Ascending aorta (tissue), 2 donors: ENCODE measurements at regions of chr1 and their contacts with region 1.

Region 1: GRCh38 chr1:55428944-55429931 is 214.1 kb upstream of the USP24 start:
- DNase-seq: peak; percentile 69 to 93
- H3K4me3 ChIP-seq: no peak overlapping the region
- H3K27ac ChIP-seq: peak overlapping the region; percentile 64 to 87
- H3K4me1 ChIP-seq: peaks cover 6 to 25% of the 10 kb centered on the region in 2 donors
- H3K27me3 ChIP-seq: no peaks in the 10 kb centered on the region
- CTCF ChIP-seq: no peak

Region 2: GRCh38 chr1:55215256-55216021 is 213.8 kb before region 1 on chr1 and contains the start of gene USP24:
- intact Hi-C with region 1: loop called (anchors 10 kb)
- DNase-seq: peak in 1 of 2 donors; percentile 85
- H3K4me3 ChIP-seq: peak within 1 kb of the TSS; percentile 82 to 93
- H3K27ac ChIP-seq: peak within 1 kb of the TSS; percentile 95 to 99
- H3K4me1 ChIP-seq: peaks cover 3 to 17% of the 10 kb centered on the region in 2 donors
- H3K27me3 ChIP-seq: no peaks in the 10 kb centered on the region
- CTCF ChIP-seq: no peak
- total RNA-seq, gene USP24: 11.2 TPM

Region 3: GRCh38 chr1:55490547-55490946 is 61.3 kb after region 1 on chr1:
- intact Hi-C with region 1: no loop called
- DNase-seq: no peak
- H3K4me3 ChIP-seq: no peak overlapping the region
- H3K27ac ChIP-seq: no peak overlapping the region
- H3K4me1 ChIP-seq: no peaks in the 10 kb centered on the region
- H3K27me3 ChIP-seq: no peaks in the 10 kb centered on the region
- CTCF ChIP-seq: no peak

Region 4: DNA sequence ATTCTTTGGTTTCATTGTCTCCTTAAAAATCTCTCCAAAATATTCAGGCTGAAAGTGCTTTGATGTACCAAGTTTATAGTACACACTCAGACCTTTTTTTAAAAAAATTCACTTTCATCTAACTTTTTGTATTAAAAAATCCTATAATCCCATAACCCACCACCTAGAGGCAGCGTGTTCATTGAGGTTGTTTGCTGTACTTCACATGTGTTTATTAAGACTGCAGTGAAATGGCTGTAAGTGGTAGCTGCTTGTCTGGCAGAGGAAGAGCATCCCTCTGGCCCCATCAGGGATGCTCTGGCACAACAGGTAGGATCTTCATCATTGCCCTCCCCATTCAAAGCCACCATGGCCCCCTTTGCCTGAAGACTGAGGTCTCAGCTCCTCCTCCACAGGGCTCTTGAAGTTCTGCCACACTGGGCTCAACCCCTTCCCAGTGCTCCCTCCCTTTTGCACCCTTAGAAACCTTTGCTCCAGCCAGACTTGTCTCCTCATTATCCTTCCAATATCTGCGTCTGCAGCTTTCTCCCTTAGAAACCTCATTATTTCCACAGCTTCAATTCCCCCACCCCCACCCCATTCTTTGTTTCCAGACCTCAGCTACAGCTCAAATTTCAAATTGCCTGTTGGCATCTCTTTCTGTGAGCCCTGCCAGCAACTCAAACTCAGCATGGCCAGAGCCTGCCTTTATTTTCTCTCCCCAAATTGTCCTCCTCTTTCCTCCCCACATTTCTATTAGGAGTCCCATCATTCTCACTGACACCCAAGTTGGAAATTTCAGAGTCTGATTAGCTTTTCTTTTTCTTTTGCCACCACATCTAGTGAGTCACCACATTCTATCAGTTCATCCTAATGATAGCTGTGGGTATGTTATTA is 155.5 kb after region 1 on chr1:
- intact Hi-C with region 1: loop called (anchors 5 kb)
- DNase-seq: no peak
- H3K4me3 ChIP-seq: no peak overlapping the region
- H3K27ac ChIP-seq: peak overlapping the region; percentile 27 to 28
- H3K4me1 ChIP-seq: peaks cover 11 to 40% of the 10 kb centered on the region in 2 donors
- H3K27me3 ChIP-seq: no peaks in the 10 kb centered on the region
- CTCF ChIP-seq: no peak

Region 5: DNA sequence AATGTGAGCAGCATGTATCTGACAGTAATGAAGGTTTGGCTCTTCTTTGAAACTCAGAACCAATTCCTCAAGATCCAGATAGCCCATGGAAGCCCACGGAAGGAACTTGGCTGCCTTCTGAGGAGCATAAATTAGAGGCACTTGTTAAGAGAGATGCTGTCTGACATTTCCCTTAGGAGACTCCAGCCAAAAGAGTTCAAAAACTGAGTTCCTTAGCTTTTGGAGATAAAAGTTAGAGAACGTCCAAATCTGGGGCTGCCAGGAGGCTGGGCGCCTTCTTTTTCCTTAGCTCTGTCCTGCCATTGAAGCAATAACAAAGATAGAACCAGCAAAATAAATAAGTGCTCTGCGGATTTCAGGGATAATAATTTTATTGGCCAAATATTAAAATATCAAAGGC is 225.5 kb after region 1 on chr1:
- intact Hi-C with region 1: loop called (anchors 5 kb)
- DNase-seq: no peak
- H3K4me3 ChIP-seq: no peak overlapping the region
- H3K27ac ChIP-seq: peak overlapping the region; percentile 70 to 83
- H3K4me1 ChIP-seq: peaks cover 0 to 7% of the 10 kb centered on the region in 2 donors
- H3K27me3 ChIP-seq: no peaks in the 10 kb centered on the region
- CTCF ChIP-seq: no peak

Region 6: DNA sequence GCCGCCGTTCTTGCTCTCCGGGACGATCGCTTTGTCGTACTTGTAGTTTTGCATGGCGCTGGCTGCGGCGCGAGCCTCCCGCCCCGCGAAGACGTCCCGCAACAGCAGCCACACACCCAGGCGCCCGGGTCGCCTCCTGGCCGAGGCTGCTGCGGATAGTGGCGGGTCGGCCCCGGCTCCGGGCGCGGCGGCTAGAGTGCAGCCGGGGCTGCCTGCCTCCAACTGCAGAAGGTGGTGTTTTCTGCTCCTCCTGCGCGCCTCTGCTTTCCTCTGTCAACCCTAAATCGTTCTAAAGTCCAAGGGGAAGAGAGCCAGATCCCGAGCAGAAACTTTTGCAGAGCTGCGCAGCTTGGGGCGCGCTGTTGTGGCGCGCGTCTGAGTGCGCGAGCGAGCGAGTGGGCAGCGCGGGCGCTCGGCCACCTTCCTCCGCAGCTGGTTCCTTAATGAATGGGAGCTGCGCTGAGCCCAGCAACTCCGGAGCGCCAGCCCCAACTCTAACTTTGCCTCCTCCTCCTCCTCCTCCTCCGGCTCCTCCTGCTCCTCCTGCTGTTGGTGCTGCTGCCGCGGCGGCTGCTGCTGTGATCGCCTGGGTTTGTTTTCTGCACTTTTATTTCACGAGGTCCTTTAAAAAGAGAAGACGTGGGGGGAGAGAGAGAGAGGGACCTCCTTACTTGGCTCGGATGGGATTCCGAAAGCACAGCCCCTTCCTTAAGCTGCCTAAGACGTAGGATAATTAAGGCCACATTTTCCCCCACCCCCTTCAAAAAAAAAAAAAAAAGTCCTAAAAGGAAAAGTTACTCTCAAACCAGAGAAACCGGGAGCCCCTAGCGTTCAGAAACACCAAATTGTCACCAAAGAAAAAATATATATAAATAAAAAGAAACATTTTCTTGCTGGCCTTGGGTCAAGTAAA is 1150.0 kb after region 1 on chr1 and contains the start of gene PLPP3:
- intact Hi-C with region 1: loop called (anchors 2 kb)
- DNase-seq: peak; percentile 52 to 94
- H3K4me3 ChIP-seq: peak within 1 kb of the TSS; percentile 92 to 94
- H3K27ac ChIP-seq: peak within 1 kb of the TSS; percentile 94 to 99
- H3K4me1 ChIP-seq: peaks cover 0 to 12% of the 10 kb centered on the region in 2 donors
- H3K27me3 ChIP-seq: no peaks in the 10 kb centered on the region
- CTCF ChIP-seq: peak; percentile 17 to 58 (median 31)
- total RNA-seq, gene PLPP3: 87.7 TPM